Activated B cell treated with CpG ODN at 0.5 μM for 24 hours (primary cell): ENCODE measurements at regions of chr16 and their contacts with region 1.

Region 1: GRCh38 chr16:1971796-1972489 is at the start of gene TBL3:
- DNase-seq: peak; percentile 99
- ATAC-seq: peak; percentile 97
- H3K4me3 Mint-ChIP-seq: peak within 1 kb of the TSS; percentile 93
- H3K27ac Mint-ChIP-seq: peak within 1 kb of the TSS; percentile 97
- H3K4me1 Mint-ChIP-seq: peaks cover 23% of the 10 kb centered on the region
- H3K27me3 Mint-ChIP-seq: no peaks in the 10 kb centered on the region
- CTCF ChIP-seq: no peak
- total RNA-seq, gene TBL3: 41.8 and 44.2 TPM in 2 replicates

Region 2: GRCh38 chr16:1942810-1943726 is 28.9 kb before region 1 on chr16 and contains the start of gene MSRB1:
- CTCF ChIA-PET with region 1: no interaction called
- POLR2A ChIA-PET with region 1: interaction called, 13 read pairs
- intact Hi-C with region 1: no loop called
- DNase-seq: peak; percentile 99
- ATAC-seq: peak; percentile 98
- H3K4me3 Mint-ChIP-seq: peak within 1 kb of the TSS; percentile 87
- H3K27ac Mint-ChIP-seq: peak within 1 kb of the TSS; percentile 74
- H3K4me1 Mint-ChIP-seq: peaks cover 30% of the 10 kb centered on the region
- H3K27me3 Mint-ChIP-seq: no peaks in the 10 kb centered on the region
- CTCF ChIP-seq: no peak
- total RNA-seq, gene MSRB1: 14.7 and 16.6 TPM in 2 replicates

Region 3: DNA sequence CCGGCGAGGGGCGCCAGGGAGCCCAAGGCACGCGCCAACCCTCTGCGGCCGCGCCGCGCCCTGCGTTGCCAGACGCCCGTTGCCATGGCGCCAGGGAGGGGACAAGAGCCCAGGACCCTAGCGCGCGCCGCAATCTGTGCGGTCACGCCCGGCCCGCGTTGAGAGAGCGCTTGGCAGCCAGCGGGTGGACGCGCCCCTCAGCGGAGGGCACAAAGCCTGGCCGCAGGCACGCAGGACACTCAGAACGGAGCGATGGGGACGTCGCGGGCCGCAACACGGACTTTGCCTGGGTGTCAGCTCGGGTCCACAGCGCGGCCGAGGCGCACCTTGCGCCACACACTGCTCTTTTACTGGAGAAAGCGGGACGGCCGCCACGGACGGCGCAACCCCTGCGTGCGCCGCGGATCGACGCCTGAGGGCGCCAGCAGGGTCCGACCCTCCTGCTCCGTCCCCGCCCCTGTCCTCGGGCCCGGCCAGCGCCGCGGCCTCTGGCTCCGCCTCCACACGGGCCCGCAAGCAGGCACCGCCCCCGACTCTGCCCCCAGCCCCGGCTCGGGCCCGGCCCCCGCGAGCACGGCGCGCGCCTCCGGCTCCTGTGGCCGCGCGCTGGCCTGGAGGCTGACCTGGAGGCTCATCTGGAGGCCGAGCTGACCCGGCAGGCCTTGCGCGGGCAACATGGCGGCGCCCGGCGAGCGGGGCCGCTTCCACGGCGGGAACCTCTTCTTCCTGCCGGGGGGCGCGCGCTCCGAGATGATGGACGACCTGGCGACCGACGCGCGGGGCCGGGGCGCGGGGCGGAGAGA is 11.8 kb after region 1 on chr16 and contains the start of gene GFER:
- CTCF ChIA-PET with region 1: interaction called, 3 read pairs
- POLR2A ChIA-PET with region 1: interaction called, 351 read pairs
- intact Hi-C with region 1: loop called (anchors 1 kb)
- DNase-seq: peak; percentile 80
- ATAC-seq: peak; percentile 92
- H3K4me3 Mint-ChIP-seq: peak within 1 kb of the TSS; percentile 83
- H3K27ac Mint-ChIP-seq: peak within 1 kb of the TSS; percentile 35
- H3K4me1 Mint-ChIP-seq: peaks cover 27% of the 10 kb centered on the region
- H3K27me3 Mint-ChIP-seq: peaks cover 14% of the 10 kb centered on the region
- CTCF ChIP-seq: no peak
- total RNA-seq, gene GFER: 31.6 and 39.4 TPM in 2 replicates